Activated naive CD4-positive, alpha-beta T cell treated with anti-CD3 and anti-CD28 coated beads for 36 hours (primary cell): ENCODE measurements at regions of chr12 and their contacts with region 1.

Region 1: GRCh38 chr12:8890313-8891085 is 23.8 kb upstream of the PHC1 start:
- DNase-seq: peak; percentile 78
- H3K4me3 Mint-ChIP-seq: peak overlapping the region; percentile 82
- H3K27ac Mint-ChIP-seq: no peak overlapping the region
- H3K4me1 Mint-ChIP-seq: peaks cover 5% of the 10 kb centered on the region
- H3K27me3 Mint-ChIP-seq: no peaks in the 10 kb centered on the region

Region 2: GRCh38 chr12:8662593-8662992 is 227.9 kb before region 1 on chr12 and contains the start of gene MFAP5:
- CTCF ChIA-PET with region 1: interaction called, 28 read pairs
- intact Hi-C with region 1: loop called (anchors 1 kb)
- DNase-seq: no peak
- H3K4me3 Mint-ChIP-seq: no peak within 1 kb of the TSS
- H3K27ac Mint-ChIP-seq: no peak within 1 kb of the TSS
- H3K4me1 Mint-ChIP-seq: no peaks in the 10 kb centered on the region
- H3K27me3 Mint-ChIP-seq: peaks cover 5% of the 10 kb centered on the region
- total RNA-seq, gene MFAP5: not detected

Region 3: DNA sequence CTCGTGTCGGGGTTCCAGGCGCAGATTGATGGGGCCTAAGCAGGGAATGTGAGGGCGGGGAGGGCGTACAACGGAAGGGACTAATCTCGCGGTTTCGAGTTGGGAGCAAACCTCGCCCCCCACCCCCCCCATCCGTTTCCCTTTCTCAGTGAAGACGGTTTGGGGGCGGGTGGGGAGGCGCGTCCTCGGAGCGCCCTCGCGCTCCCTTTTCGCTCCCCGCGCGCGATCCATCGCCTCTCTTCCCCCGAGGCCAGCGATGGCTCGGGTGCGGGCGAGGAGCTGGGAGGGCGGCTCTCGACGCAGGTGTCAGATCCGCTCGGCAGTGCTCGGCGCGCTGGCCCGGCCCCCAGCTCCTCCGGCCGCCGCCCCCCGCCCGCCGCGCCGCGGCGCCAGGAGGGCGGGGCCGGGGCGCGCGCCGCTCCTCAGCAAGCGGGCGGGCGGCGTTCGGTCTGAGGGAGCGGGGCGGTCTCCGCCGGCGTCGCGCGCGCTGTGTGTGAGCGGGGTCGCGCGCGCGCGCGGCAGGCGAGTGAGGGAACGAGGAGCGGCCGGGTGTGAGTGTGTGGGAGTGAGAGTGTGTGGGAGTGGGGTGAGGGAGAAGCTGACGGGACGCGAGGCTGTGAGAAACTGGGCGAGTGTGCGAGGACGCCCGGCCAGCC is 192.9 kb before region 1 on chr12 and contains the start of gene RIMKLB:
- CTCF ChIA-PET with region 1: interaction called, 11 read pairs
- intact Hi-C with region 1: loop called (anchors 5 kb)
- DNase-seq: peak; percentile 68
- H3K4me3 Mint-ChIP-seq: peak within 1 kb of the TSS; percentile 91
- H3K27ac Mint-ChIP-seq: peak within 1 kb of the TSS; percentile 30
- H3K4me1 Mint-ChIP-seq: peaks cover 25% of the 10 kb centered on the region
- H3K27me3 Mint-ChIP-seq: no peaks in the 10 kb centered on the region
- total RNA-seq, gene RIMKLB: 5.2 to 5.5 TPM

Region 4: DNA sequence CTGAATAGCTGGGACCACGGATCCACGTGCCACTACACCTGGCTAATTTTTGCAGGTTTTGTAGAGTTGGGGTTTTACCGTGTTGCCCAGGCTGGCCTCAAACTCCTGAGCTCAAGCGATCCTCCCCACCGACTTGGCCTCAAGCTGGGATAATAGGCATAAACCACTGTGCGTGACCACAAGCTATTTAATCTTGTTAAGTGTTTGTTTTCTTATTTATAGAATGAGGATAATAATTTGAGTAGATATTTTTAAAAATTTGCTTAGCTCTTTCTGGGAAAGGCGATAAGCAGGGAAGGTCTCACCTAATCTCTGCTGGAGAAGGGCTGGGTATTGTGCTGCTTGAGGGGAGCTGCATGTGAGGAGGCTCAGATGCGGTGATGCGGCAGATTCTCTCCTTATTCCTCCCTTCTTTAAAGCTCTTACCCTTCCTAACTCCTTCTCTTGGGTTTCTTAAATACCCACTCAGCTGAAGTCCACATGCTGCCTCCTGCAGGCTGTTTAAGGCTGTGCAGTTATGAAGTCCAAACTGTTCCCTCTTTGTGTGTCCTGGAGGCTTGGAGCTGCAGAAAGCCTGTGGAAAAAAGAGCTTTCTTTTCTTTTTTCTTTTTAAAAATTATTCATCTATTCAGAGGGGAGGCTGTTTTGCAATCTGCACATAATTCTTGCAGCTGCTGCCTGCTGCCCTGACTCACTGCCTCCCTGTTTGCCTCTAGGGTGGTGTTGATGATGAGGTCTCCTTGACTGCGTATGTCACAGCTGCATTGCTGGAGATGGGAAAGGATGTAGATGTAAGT is 30.1 kb before region 1 on chr12:
- CTCF ChIA-PET with region 1: interaction called, 29 read pairs
- intact Hi-C with region 1: no loop called
- DNase-seq: peak; percentile 57
- H3K4me3 Mint-ChIP-seq: no peak overlapping the region
- H3K27ac Mint-ChIP-seq: no peak overlapping the region
- H3K4me1 Mint-ChIP-seq: no peaks in the 10 kb centered on the region
- H3K27me3 Mint-ChIP-seq: no peaks in the 10 kb centered on the region

Region 5: DNA sequence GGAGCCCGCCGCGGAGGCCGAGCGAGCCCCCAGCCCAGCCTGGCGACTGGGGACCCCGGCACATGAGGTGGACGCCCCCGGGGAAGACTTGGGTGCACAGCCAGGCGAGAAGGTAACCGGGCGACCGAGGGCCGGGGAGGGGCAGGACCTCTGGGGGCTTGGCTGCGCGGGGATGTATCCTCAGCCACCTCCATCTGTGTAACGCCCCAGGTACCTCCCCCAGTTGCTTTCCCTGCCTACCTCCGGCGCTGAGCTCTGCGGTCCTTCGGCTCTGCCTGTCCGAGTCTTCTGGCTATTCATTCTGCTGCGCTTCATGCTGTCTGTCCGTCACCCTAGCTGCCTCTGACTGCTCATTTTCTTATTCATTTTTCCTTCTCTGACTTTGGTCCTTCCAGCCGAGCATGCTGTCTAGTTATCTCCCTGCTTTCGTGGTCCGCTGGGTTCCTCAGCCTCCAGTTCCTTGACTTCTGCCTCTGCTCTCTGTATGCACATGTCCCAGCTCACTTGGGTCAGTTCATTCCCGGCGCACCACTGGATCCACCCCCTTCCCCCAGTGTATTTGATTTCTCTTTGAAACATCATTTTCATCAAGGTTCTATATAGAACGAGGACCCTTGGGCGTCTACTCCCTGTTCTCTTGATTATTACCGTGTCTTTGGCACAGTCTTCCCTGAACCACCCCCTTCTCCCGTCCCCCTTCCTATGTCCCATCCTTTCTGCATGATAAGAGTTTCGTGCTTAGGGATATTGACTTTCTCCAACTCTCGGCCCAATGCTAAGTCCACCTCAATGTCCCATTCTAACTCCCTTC is 24.4 kb after region 1 on chr12:
- CTCF ChIA-PET with region 1: interaction called, 6 read pairs
- intact Hi-C with region 1: loop called (anchors 2 kb)
- DNase-seq: peak; percentile 61
- H3K4me3 Mint-ChIP-seq: no peak overlapping the region
- H3K27ac Mint-ChIP-seq: no peak overlapping the region
- H3K4me1 Mint-ChIP-seq: peaks cover 15% of the 10 kb centered on the region
- H3K27me3 Mint-ChIP-seq: no peaks in the 10 kb centered on the region

Region 6: GRCh38 chr12:9049520-9050133 is 159.1 kb after region 1 on chr12:
- CTCF ChIA-PET with region 1: interaction called, 29 read pairs
- intact Hi-C with region 1: loop called (anchors 1 kb)
- DNase-seq: peak; percentile 33
- H3K4me3 Mint-ChIP-seq: no peak overlapping the region
- H3K27ac Mint-ChIP-seq: no peak overlapping the region
- H3K4me1 Mint-ChIP-seq: peaks cover 11% of the 10 kb centered on the region
- H3K27me3 Mint-ChIP-seq: no peaks in the 10 kb centered on the region